ENCODE measurements at regions of chr10 and their contacts with region 1.

Region 1: GRCh38 chr10:48981310-48981907 is 41.8 kb upstream of the LRRC18 start:
- DNase-seq: peak; percentile 15
- H3K4me3 ChIP-seq: no peak overlapping the region
- H3K27ac ChIP-seq: no peak overlapping the region
- H3K4me1 ChIP-seq: no peaks in the 10 kb centered on the region
- H3K27me3 ChIP-seq: peaks cover 5% of the 10 kb centered on the region
- CTCF ChIP-seq: peak; percentile 75

Region 2: DNA sequence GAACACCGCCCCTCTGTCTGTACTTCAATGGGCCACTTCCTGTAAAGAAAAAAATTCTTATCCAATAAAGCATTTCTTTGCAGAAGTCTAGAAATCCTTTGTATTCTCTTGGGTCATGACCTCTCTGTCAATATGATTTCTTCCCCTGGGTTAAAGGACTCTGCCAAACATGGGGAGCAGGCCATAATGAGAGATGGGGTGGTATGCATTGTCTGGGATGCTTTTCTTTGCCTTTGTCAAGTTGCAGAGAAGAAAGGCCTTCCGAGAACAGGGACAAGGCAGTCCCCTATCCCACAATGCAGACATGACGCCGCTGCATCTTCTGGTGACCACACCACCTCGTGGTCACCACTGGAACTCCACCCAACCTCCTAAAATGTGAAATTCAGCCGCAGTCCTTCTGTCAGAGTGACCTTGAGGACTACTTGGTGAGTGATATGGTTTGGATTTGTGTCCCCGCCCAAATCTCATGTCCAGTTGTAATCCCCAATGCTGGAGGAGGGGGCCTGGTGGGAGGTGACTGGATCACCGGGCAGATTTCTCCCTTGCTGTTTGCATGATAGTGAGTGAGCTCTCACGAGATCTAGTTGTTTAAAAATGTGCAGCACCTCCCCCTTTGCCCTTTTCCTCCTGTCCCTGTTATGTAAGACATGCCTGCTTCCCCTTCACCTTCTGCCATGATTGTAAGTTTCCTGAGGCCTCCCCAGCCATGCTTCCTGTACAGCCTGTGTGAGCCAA is 691.7 kb before region 1 on chr10:
- CTCF ChIA-PET with region 1: no interaction called
- POLR2A ChIA-PET with region 1: no interaction called
- intact Hi-C with region 1: no loop called
- DNase-seq: peak; percentile 72
- H3K4me3 ChIP-seq: no peak overlapping the region
- H3K27ac ChIP-seq: no peak overlapping the region
- H3K4me1 ChIP-seq: peaks cover 4% of the 10 kb centered on the region
- H3K27me3 ChIP-seq: no peaks in the 10 kb centered on the region
- CTCF ChIP-seq: peak; percentile 80

Region 3: GRCh38 chr10:48968036-48968435 is 13.4 kb before region 1 on chr10:
- CTCF ChIA-PET with region 1: no interaction called
- POLR2A ChIA-PET with region 1: no interaction called
- intact Hi-C with region 1: no loop called
- DNase-seq: no peak
- H3K4me3 ChIP-seq: no peak overlapping the region
- H3K27ac ChIP-seq: no peak overlapping the region
- H3K4me1 ChIP-seq: no peaks in the 10 kb centered on the region
- H3K27me3 ChIP-seq: no peaks in the 10 kb centered on the region
- CTCF ChIP-seq: no peak

Region 4: DNA sequence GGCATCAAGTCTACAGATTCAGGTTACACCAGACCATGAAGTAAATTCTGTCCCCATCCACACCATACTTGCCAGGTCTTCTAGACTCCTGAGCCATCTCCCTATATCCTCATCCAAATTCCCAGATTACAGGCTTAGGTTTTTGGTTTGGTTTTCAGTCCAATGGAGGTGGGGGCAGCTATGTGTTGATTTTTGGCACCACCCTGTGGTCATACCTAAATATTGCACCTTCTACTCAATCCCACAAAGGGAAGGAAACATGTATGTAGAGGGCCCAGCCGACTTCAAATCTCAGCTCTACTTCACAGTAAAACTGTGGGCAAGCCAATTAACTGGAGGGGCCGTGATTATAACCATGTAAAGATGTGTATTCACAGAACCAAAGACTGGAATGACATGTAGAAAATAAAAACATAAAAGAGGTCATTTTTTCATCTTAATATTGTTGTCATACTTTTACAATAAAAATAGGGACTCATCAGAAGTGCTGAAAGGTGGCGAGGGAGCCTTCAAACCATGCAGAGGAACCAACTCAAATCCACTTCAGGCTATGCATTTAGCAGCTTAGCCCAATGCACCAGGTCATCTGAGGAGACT is 537.7 kb after region 1 on chr10:
- CTCF ChIA-PET with region 1: no interaction called
- POLR2A ChIA-PET with region 1: no interaction called
- intact Hi-C with region 1: loop called (anchors 5 kb)
- DNase-seq: peak; percentile 67
- H3K4me3 ChIP-seq: no peak overlapping the region
- H3K27ac ChIP-seq: no peak overlapping the region
- H3K4me1 ChIP-seq: no peaks in the 10 kb centered on the region
- H3K27me3 ChIP-seq: no peaks in the 10 kb centered on the region
- CTCF ChIP-seq: peak; percentile 74